IMR-90 (cell line): ENCODE measurements at regions of chr3 and their contacts with region 1.

Region 1: GRCh38 chr3:16476641-16477455 is 36.7 kb downstream of the RFTN1 start:
- DNase-seq: peak; percentile 99
- ATAC-seq: peak; percentile 77
- H3K4me3 ChIP-seq: no peak overlapping the region
- H3K27ac ChIP-seq: peak overlapping the region; percentile 74; the same call in 1 of the 2 replicates
- H3K4me1 ChIP-seq: peaks cover 34% of the 10 kb centered on the region
- H3K27me3 ChIP-seq: no peaks in the 10 kb centered on the region
- CTCF ChIP-seq: no peak
- POLR2A ChIP-seq: no peak
- RAD21 ChIP-seq: no peak; the same call in 1 of the 2 replicates

Region 2: GRCh38 chr3:16382845-16383244 is 94.0 kb before region 1 on chr3:
- CTCF ChIA-PET with region 1: no interaction called
- POLR2A ChIA-PET with region 1: interaction called, 12 read pairs
- dilution Hi-C with region 1: no loop called
- in situ Hi-C with region 1: no loop called
- intact Hi-C with region 1: no loop called
- DNase-seq: no peak
- ATAC-seq: no peak
- H3K4me3 ChIP-seq: no peak overlapping the region
- H3K27ac ChIP-seq: no peak overlapping the region
- H3K4me1 ChIP-seq: peaks cover 32% of the 10 kb centered on the region
- H3K27me3 ChIP-seq: no peaks in the 10 kb centered on the region
- CTCF ChIP-seq: no peak
- POLR2A ChIP-seq: no peak
- RAD21 ChIP-seq: no peak